T-cell (primary cell): ENCODE measurements at regions of chr1 and their contacts with region 1.

Region 1: DNA sequence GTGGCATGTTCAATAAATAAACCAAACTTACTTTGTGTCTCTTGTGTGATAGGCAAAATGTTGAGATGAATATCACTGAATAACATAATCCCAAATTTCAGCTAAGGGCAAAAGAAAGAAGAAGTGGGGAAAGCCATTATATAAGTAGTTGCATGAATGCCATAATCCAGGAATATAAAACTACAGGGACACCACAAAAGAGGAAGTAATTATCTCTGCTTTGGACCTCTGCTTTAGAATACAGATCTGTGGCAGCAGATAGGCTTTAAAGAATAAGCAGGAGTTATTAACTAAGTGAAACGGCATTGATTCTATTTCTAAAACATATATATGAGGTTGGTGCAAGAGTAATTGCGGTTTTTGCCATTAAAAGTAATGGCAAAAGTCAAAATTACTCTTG is 288.5 kb upstream of the SNX7 start:
- DNase-seq: no peak
- ATAC-seq: no peak
- H3K4me3 ChIP-seq: no peak overlapping the region
- H3K4me3 Mint-ChIP-seq: no peak overlapping the region
- H3K27ac ChIP-seq: no peak overlapping the region
- H3K27ac Mint-ChIP-seq: no peak overlapping the region
- H3K4me1 ChIP-seq: no peaks in the 10 kb centered on the region
- H3K4me1 Mint-ChIP-seq: peaks cover 0 to 8% (median 0%) of the 10 kb centered on the region in 3 donors
- H3K27me3 ChIP-seq: no peaks in the 10 kb centered on the region
- H3K27me3 Mint-ChIP-seq: no peaks in the 10 kb centered on the region

Region 2: GRCh38 chr1:98288494-98288893 is 84.6 kb before region 1 on chr1:
- CTCF ChIA-PET with region 1: no interaction called
- POLR2A ChIA-PET with region 1: interaction called in 1 of 2 experiments, 13 read pairs
- DNase-seq: no peak
- ATAC-seq: no peak
- H3K4me3 ChIP-seq: no peak overlapping the region
- H3K4me3 Mint-ChIP-seq: no peak overlapping the region
- H3K27ac ChIP-seq: no peak overlapping the region
- H3K27ac Mint-ChIP-seq: no peak overlapping the region
- H3K4me1 ChIP-seq: no peaks in the 10 kb centered on the region
- H3K4me1 Mint-ChIP-seq: no peaks in the 10 kb centered on the region
- H3K27me3 ChIP-seq: no peaks in the 10 kb centered on the region
- H3K27me3 Mint-ChIP-seq: no peaks in the 10 kb centered on the region